Activated B cell treated with CpG ODN at 0.5 μM for 24 hours (primary cell): ENCODE measurements at regions of chr12 and their contacts with region 1.

Region 1: DNA sequence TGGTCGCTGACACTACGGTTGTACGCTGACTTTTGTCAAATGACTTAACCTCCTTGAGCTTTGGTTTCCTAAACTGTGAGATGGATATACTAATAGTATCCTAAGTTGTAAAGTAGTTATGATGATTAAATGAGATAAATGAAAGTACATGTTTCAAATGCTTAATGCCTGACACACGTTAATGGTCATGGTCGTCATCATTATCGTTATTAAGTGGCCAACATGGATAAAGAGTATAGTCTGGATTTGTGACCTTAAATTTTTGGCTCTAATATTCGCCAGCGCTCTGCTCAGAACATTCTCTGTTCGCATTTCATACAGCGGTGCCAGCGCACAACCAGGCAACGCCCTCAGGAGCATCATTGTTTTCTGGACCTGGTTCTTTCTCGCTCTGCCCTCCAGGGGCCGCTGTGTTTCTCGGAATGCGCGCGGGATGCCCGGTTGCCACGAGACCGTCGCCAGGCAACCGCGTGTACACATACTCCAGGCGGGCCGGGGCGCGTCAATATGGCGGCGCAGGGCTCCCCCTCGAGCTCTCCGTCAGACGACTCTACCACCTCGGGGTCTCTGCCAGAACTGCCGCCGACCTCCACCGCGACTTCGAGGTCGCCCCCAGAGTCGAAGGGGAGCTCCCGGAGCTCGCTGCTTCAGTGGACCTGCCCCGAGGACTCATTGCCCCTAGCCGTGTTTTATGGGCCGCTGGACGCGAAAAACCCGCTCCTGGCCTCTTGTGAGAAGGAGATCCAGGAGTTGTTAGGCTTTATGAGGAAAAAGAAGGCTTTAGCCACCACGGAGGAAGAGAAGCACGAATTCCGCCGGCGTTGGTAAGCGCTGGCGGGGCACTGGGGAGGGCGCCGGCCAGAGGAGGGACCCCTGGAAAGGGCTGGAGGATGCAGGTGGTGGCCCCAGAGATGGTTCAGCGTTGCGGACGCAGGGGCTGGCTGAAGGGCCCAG is at the start of gene CFAP54:
- DNase-seq: peak; percentile 91
- ATAC-seq: peak; percentile 90
- H3K4me3 Mint-ChIP-seq: peak within 1 kb of the TSS; percentile 90
- H3K27ac Mint-ChIP-seq: peak within 1 kb of the TSS; percentile 82
- H3K4me1 Mint-ChIP-seq: peaks cover 22% of the 10 kb centered on the region
- H3K27me3 Mint-ChIP-seq: no peaks in the 10 kb centered on the region
- CTCF ChIP-seq: peak; percentile 65
- total RNA-seq, gene CFAP54: 0.44 and 0.64 TPM in 2 replicates

Region 2: DNA sequence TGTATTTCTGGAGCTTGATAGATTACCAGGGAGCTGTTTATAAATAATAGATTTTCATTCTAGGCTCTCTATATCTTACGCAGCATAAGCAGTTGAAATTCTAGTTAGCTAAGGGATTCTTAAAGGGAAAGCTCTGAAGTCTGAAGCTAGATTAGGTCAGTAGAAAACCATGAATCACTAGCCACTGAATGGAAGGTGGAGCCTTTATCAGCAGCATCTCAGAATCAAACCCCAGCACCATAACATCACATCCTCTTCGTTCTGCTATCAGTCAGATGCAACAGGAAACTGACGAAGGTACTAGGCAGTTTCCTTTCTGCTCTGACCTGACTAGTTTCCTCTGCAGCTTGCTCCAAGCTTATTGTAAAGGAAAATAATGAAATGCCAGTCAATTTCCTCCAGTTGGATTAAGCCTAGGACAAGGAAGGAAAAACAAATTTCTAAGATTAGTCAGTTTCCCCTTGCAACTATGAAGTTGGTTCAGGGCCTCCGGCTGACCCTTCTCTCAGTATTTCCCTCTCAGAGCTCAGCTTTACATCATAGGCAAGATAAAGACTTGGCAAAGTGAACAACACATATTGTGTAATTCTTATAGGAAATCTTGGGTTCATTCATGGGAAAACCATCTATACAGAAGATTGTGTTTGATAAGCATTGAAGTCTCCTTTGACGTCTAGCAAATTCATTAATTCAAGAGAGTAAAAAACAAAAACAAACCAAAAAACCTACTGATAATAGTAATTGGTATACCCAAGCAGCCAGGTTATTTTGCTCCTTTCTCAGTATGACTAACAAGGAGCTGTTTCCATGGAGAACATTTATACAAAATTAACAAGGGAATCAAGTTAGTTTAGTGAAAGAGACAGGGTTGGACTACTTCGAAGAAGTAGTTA is 43.4 kb before region 1 on chr12:
- CTCF ChIA-PET with region 1: interaction called, 3 read pairs
- POLR2A ChIA-PET with region 1: interaction called, 3 read pairs
- intact Hi-C with region 1: loop called (anchors 5 kb)
- DNase-seq: no peak
- ATAC-seq: peak; percentile 98
- H3K4me3 Mint-ChIP-seq: peak overlapping the region; percentile 5
- H3K27ac Mint-ChIP-seq: peak overlapping the region; percentile 79
- H3K4me1 Mint-ChIP-seq: peaks cover 16% of the 10 kb centered on the region
- H3K27me3 Mint-ChIP-seq: no peaks in the 10 kb centered on the region
- CTCF ChIP-seq: no peak

Region 3: GRCh38 chr12:96456265-96456974 is 33.0 kb before region 1 on chr12:
- CTCF ChIA-PET with region 1: no interaction called
- POLR2A ChIA-PET with region 1: interaction called, 4 read pairs
- intact Hi-C with region 1: loop called (anchors 1 kb)
- DNase-seq: no peak
- ATAC-seq: peak; percentile 94
- H3K4me3 Mint-ChIP-seq: peak overlapping the region; percentile 55
- H3K27ac Mint-ChIP-seq: peak overlapping the region; percentile 62
- H3K4me1 Mint-ChIP-seq: peaks cover 28% of the 10 kb centered on the region
- H3K27me3 Mint-ChIP-seq: no peaks in the 10 kb centered on the region
- CTCF ChIP-seq: no peak

Region 4: DNA sequence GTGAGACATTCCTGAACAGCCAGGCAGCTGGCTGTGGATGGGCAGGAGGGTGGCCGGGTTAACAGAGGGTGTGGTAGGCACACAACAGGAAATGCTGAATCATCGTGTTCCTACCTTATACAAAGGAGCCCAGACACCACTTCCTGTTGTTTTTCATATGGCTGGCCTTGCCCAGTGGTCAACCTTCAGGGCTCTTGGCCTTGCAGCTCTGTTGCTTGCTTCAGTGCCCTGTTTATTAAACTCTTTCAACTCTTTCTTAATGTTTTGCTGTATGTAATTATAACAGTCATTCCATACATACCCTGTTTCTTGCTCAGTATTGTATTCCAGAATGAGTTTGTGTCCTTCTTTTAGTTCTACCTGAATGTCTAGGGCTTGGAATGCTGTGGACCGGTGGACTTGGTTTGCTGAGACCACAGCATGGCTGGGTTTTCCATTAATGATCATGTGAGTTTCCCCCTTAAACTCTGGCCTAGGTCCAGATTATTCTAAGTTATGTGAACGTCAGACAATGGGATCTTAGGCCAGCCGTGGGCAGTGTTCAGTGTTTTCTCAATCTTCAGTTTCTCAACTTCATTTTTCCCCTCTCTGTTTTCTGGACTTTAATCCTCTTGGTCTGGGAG is 11.9 kb after region 1 on chr12:
- CTCF ChIA-PET with region 1: interaction called, 3 read pairs
- POLR2A ChIA-PET with region 1: no interaction called
- intact Hi-C with region 1: loop called (anchors 1 kb)
- DNase-seq: no peak
- ATAC-seq: peak; percentile 65
- H3K4me3 Mint-ChIP-seq: no peak overlapping the region
- H3K27ac Mint-ChIP-seq: peak overlapping the region; percentile 55
- H3K4me1 Mint-ChIP-seq: peaks cover 35% of the 10 kb centered on the region
- H3K27me3 Mint-ChIP-seq: no peaks in the 10 kb centered on the region
- CTCF ChIP-seq: no peak